GM12878 (cell line): ENCODE measurements at regions of chr4 and their contacts with region 1.

Region 1: GRCh38 chr4:118352843-118353533 is at the start of gene PRSS12:
- DNase-seq: no peak
- ATAC-seq: peak; percentile 98
- H3K4me3 ChIP-seq: no peak within 1 kb of the TSS
- H3K27ac ChIP-seq: no peak within 1 kb of the TSS
- H3K4me1 ChIP-seq: no peaks in the 10 kb centered on the region
- H3K27me3 ChIP-seq: peaks cover 4 to 7% of the 10 kb centered on the region in 2 experiments
- CTCF ChIP-seq: peak; percentile 62 to 69 (median 65); a peak in 5 of 6 replicates
- EP300 ChIP-seq: no peak
- POLR2A ChIP-seq: no peak
- RAD21 ChIP-seq: no peak
- polyA plus RNA-seq, gene PRSS12: 0.04 to 0.14 TPM

Region 2: GRCh38 chr4:117957571-117957970 is 395.4 kb before region 1 on chr4:
- CTCF ChIA-PET with region 1: no interaction called
- POLR2A ChIA-PET with region 1: no interaction called
- RAD21 ChIA-PET with region 1: no interaction called
- SMC1A ChIA-PET with region 1: no interaction called
- in situ Hi-C with region 1: no loop called
- intact Hi-C with region 1: no loop called
- DNase-seq: no peak
- ATAC-seq: no peak
- H3K4me3 ChIP-seq: no peak overlapping the region
- H3K27ac ChIP-seq: no peak overlapping the region
- H3K4me1 ChIP-seq: no peaks in the 10 kb centered on the region
- H3K27me3 ChIP-seq: no peaks in the 10 kb centered on the region
- CTCF ChIP-seq: no peak
- EP300 ChIP-seq: no peak
- POLR2A ChIP-seq: no peak
- RAD21 ChIP-seq: no peak

Region 3: GRCh38 chr4:118284169-118284568 is 68.8 kb before region 1 on chr4:
- CTCF ChIA-PET with region 1: interaction called, 11 read pairs
- POLR2A ChIA-PET with region 1: no interaction called
- RAD21 ChIA-PET with region 1: interaction called, 4 read pairs
- SMC1A ChIA-PET with region 1: interaction called, 6 read pairs
- in situ Hi-C with region 1: no loop called
- intact Hi-C with region 1: loop called (anchors 2 kb)
- DNase-seq: no peak
- ATAC-seq: peak; percentile 56
- H3K4me3 ChIP-seq: no peak overlapping the region
- H3K27ac ChIP-seq: no peak overlapping the region
- H3K4me1 ChIP-seq: peaks cover 13% of the 10 kb centered on the region; the same call in 1 of the 2 replicates
- H3K27me3 ChIP-seq: no peaks in the 10 kb centered on the region
- CTCF ChIP-seq: no peak
- EP300 ChIP-seq: no peak
- POLR2A ChIP-seq: no peak
- RAD21 ChIP-seq: no peak

Region 4: DNA sequence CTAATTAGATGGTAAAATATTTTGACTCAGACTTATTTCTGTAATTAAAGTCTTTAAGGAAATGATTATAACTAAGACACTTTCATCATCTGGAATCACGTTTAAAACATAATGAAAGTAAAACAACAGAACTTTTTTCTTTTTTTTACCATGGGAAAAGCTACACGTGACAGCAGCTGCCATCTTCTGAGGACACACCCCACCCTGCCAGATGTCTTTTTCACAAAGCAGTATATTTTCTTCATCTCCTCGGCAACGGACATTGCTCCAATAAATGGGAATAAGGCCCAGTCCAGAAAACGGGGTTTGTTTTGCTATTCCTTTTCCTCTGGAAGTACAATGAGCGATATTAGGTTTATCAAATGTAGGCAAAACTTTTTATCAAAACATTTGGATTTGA is 17.7 kb before region 1 on chr4:
- CTCF ChIA-PET with region 1: interaction called, 13 read pairs
- POLR2A ChIA-PET with region 1: no interaction called
- RAD21 ChIA-PET with region 1: interaction called, 4 read pairs
- SMC1A ChIA-PET with region 1: interaction called, 5 read pairs
- in situ Hi-C with region 1: no loop called
- intact Hi-C with region 1: no loop called
- DNase-seq: no peak
- ATAC-seq: no peak
- H3K4me3 ChIP-seq: no peak overlapping the region
- H3K27ac ChIP-seq: no peak overlapping the region
- H3K4me1 ChIP-seq: no peaks in the 10 kb centered on the region
- H3K27me3 ChIP-seq: peaks cover 0 to 2% of the 10 kb centered on the region in 2 experiments; a peak in 1 of 4 replicates
- CTCF ChIP-seq: no peak
- EP300 ChIP-seq: no peak
- POLR2A ChIP-seq: no peak
- RAD21 ChIP-seq: no peak

Region 5: DNA sequence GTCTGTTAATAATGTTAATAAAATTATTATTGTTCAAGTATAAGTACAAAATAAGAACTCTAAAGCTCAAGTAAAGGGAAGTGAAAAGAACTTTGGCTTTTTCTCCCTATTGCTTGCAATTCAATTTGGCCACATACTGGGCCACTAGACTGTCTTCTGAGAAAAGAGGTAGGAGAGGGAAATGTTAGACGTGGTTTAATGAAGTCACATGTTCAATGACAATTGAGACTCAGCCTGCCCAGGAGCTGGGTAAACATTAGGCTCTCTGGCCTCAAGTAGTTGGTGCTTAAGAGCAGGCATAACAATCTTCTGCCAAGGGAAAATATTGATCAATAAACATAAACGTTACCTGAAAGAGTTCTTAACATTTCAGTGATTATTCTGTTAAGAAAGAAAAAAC is 14.9 kb after region 1 on chr4:
- CTCF ChIA-PET with region 1: interaction called, 20 read pairs
- POLR2A ChIA-PET with region 1: interaction called, 3 read pairs
- RAD21 ChIA-PET with region 1: interaction called, 4 read pairs
- SMC1A ChIA-PET with region 1: interaction called, 4 read pairs
- in situ Hi-C with region 1: no loop called
- intact Hi-C with region 1: no loop called
- DNase-seq: no peak
- ATAC-seq: peak; percentile 55
- H3K4me3 ChIP-seq: no peak overlapping the region
- H3K27ac ChIP-seq: no peak overlapping the region
- H3K4me1 ChIP-seq: no peaks in the 10 kb centered on the region
- H3K27me3 ChIP-seq: no peaks in the 10 kb centered on the region
- CTCF ChIP-seq: no peak
- EP300 ChIP-seq: no peak
- POLR2A ChIP-seq: no peak
- RAD21 ChIP-seq: no peak